CD8-positive, alpha-beta memory T cell (primary cell): ENCODE measurements at regions of chr12 and their contacts with region 1.

Region 1: GRCh38 chr12:68317047-68317667 is 15.0 kb downstream of the MDM1 start:
- DNase-seq: peak; percentile 24 to 47 (median 38)
- H3K4me3 ChIP-seq: no peak overlapping the region
- H3K4me3 Mint-ChIP-seq: no peak overlapping the region
- H3K27ac ChIP-seq: no peak overlapping the region
- H3K27ac Mint-ChIP-seq: no peak overlapping the region
- H3K4me1 ChIP-seq: no peaks in the 10 kb centered on the region
- H3K4me1 Mint-ChIP-seq: no peaks in the 10 kb centered on the region
- H3K27me3 ChIP-seq: no peaks in the 10 kb centered on the region
- H3K27me3 Mint-ChIP-seq: no peaks in the 10 kb centered on the region

Region 2: DNA sequence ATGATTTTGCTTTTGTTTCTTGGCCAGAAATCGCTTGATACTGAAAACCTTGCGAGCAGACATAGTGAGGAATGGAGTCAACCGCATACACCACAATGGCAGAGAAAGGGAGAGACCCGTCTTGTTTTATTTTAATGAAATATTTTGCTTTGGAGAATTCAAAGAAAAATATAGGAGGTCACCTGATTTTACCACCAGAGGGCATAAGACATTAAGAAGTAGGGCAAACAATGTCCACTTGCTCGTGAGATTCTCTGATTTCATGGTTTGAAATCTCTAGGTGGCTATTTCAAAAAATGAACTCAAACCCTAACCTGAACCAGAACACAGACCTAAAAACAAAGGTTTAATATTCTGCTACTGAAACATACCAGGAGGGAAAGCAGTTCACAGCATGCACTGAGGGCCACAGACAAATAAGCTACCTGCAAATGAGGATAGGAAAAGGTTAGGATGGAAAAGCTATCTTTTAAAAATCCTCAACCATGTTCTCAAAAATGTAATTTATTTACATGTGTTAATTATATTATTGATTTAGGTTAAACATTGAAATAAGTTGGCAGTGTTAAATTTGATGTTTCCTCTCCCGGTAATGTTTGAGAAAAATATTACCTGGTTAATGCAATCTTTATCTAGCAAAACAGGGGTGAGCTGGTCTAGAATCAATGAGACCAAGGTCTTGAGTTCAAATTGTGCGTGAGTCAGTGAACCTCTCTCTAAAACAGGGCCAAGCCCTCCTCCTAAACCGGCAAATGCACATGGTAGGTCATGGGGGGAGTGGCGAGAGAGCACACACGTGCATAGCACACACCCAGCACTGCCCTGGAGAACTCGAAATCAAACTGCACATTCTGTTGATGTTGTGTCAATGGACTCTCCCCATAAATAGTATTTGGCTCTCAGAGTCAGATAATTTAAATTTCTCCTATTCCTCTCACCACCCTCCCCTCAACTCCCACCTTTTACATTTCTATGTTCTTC is 315.4 kb before region 1 on chr12:
- CTCF ChIA-PET with region 1: no interaction called
- POLR2A ChIA-PET with region 1: no interaction called
- DNase-seq: no peak
- H3K4me3 ChIP-seq: no peak overlapping the region
- H3K4me3 Mint-ChIP-seq: peak overlapping the region in 2 of 7 donors; percentile 21 to 25
- H3K27ac ChIP-seq: no peak overlapping the region
- H3K27ac Mint-ChIP-seq: peak overlapping the region in 4 of 8 donors; percentile 1 to 43 (median 38)
- H3K4me1 ChIP-seq: peaks cover 6% of the 10 kb centered on the region
- H3K4me1 Mint-ChIP-seq: peaks cover 46 to 63% (median 54%) of the 10 kb centered on the region in 3 donors
- H3K27me3 ChIP-seq: no peaks in the 10 kb centered on the region
- H3K27me3 Mint-ChIP-seq: no peaks in the 10 kb centered on the region

Region 3: GRCh38 chr12:68040450-68041075 is 276.6 kb before region 1 on chr12:
- CTCF ChIA-PET with region 1: interaction called, 24 read pairs
- POLR2A ChIA-PET with region 1: no interaction called
- DNase-seq: peak; percentile 39 to 76 (median 58)
- H3K4me3 ChIP-seq: no peak overlapping the region
- H3K4me3 Mint-ChIP-seq: peak overlapping the region in 2 of 7 donors; percentile 41 to 51
- H3K27ac ChIP-seq: no peak overlapping the region
- H3K27ac Mint-ChIP-seq: peak overlapping the region in 6 of 8 donors; percentile 8 to 75 (median 34)
- H3K4me1 ChIP-seq: no peaks in the 10 kb centered on the region
- H3K4me1 Mint-ChIP-seq: peaks cover 29 to 53% (median 48%) of the 10 kb centered on the region in 3 donors
- H3K27me3 ChIP-seq: no peaks in the 10 kb centered on the region
- H3K27me3 Mint-ChIP-seq: no peaks in the 10 kb centered on the region

Region 4: DNA sequence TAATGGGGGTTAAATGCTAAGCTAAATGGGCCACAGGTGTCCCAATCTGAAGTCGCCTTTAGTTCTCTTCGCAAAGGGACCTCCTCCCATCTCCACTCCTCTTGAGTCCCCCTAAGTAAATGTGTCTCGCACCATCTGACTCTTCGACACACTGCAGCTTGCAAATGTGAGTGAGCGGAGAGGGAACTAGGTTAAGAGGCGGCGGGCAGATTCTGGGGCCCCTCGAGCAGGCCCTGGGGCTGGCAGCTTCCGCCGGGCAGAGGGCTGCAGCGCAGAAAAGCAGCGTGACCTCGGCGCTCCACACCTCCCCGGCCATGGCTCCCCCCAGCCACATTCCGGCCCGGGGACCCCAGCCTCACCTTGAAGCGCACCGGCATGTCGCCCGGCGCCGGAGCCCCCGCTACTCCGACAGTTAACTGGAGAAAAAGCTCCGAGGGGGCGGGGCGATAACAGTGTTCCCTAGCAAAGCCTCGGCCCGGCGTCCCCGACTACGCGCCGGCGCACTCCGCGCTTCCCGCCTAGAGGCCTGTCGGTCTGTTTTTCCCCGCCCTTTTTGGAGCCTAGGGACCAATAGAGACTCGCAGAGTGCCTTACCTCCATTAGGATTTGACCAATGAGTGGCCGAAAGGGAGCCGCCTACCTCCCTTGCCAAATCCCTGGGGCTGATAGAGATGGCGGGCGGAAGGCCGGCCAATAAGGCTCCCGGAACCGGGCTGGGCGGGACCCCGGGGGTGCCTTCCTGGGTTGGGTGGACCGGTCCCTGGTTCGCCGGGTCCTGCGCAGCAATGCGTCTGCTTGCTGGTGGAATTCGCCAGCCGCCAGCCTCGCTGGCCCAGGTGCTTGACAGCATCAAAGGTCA is 14.9 kb after region 1 on chr12 and contains the start of gene MDM1:
- CTCF ChIA-PET with region 1: interaction called, 12 read pairs
- POLR2A ChIA-PET with region 1: no interaction called
- DNase-seq: peak; percentile 95 to 97 (median 97)
- H3K4me3 ChIP-seq: peak within 1 kb of the TSS; percentile 83
- H3K4me3 Mint-ChIP-seq: peak within 1 kb of the TSS; percentile 90 to 95 (median 90)
- H3K27ac ChIP-seq: peak within 1 kb of the TSS; percentile 52
- H3K27ac Mint-ChIP-seq: peak within 1 kb of the TSS; percentile 42 to 91 (median 87)
- H3K4me1 ChIP-seq: peaks cover 26% of the 10 kb centered on the region
- H3K4me1 Mint-ChIP-seq: peaks cover 39 to 55% (median 43%) of the 10 kb centered on the region in 3 donors
- H3K27me3 ChIP-seq: no peaks in the 10 kb centered on the region
- H3K27me3 Mint-ChIP-seq: peaks cover 0 to 13% of the 10 kb centered on the region in 2 donors
- total RNA-seq, gene MDM1: 23.6 to 25.3 TPM

Region 5: DNA sequence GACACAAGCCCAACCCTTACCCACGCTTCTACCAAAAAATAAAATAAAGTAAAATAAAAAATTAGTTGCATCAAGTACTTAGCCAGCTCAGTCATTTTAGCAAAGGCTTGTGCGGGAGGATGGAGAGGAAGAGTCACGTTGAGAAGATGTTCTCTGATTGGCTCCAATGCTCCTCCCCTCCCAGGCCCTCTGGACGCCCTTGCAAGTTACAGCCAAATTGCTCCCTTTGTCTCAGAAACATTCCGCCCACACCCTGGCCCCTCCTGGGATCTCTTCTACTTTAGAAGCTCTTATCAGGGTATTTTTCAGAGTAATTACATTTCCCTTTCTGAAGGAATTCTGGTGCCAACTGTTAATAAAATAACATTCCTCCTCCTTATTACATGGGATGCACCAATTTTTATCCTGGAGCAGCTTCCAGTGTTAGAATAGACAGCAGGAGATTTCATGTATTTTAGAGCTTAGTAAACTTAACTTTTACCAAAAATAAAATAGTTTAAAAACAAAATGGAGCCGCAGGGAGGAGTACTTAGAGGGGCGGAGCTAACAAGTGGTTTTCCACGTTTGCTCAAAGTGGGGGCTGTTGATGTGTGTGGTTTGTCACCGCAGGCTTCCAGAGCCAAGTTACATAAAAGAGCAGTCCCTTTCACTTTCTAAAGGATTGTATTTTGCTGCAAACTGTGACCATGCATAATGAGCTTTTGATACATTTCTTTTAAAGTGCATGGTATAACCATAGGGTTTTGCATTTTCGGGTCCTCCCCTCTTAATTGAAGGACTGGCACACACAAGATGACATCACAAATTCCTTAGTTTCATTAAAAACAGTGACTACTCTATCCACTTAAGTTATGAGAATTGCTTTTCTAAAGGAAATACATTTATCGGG is 221.8 kb after region 1 on chr12:
- CTCF ChIA-PET with region 1: no interaction called
- POLR2A ChIA-PET with region 1: no interaction called
- DNase-seq: peak; percentile 32 to 85 (median 78)
- H3K4me3 ChIP-seq: peak overlapping the region; percentile 49
- H3K4me3 Mint-ChIP-seq: peak overlapping the region; percentile 49 to 83 (median 72)
- H3K27ac ChIP-seq: no peak overlapping the region
- H3K27ac Mint-ChIP-seq: peak overlapping the region in 7 of 8 donors; percentile 23 to 83 (median 70)
- H3K4me1 ChIP-seq: peaks cover 45% of the 10 kb centered on the region
- H3K4me1 Mint-ChIP-seq: peaks cover 61 to 67% (median 62%) of the 10 kb centered on the region in 3 donors
- H3K27me3 ChIP-seq: no peaks in the 10 kb centered on the region
- H3K27me3 Mint-ChIP-seq: no peaks in the 10 kb centered on the region